CD8-positive, alpha-beta T cell (primary cell): ENCODE measurements at regions of chr4 and their contacts with region 1.

Region 1: GRCh38 chr4:15702941-15703403 is at the start of gene BST1:
- DNase-seq: peak; percentile 13 to 69 (median 51)
- ATAC-seq: peak; percentile 79
- H3K4me3 ChIP-seq: peak within 1 kb of the TSS; percentile 50 to 59
- H3K4me3 Mint-ChIP-seq: peak within 1 kb of the TSS; percentile 87
- H3K27ac ChIP-seq: no peak within 1 kb of the TSS
- H3K27ac Mint-ChIP-seq: no peak within 1 kb of the TSS
- H3K4me1 ChIP-seq: no peaks in the 10 kb centered on the region
- H3K4me1 Mint-ChIP-seq: peaks cover 16% of the 10 kb centered on the region
- H3K27me3 ChIP-seq: no peaks in the 10 kb centered on the region
- H3K27me3 Mint-ChIP-seq: peaks cover 16% of the 10 kb centered on the region
- CTCF ChIP-seq: no peak
- total RNA-seq, gene BST1: 0.43 to 0.47 TPM

Region 2: DNA sequence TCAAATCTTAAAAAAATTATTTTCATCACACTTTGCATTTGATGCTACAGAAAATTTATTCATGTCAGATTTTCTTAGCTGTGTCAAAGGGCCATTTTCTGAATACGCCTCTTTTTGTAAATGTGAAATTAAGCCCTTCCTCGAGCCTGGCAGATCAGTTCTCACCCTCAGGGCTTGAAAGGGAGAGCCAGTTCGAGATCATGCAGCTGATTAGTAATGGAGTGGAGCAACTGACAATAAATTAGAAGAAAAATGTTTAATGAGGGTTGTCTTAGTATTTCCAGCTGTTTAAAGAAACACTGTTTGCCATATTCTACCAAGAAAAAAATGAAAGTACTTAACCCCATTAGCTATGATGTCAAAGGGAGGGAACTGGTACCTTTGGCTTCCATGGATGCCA is 204.6 kb before region 1 on chr4:
- CTCF ChIA-PET with region 1: no interaction called
- POLR2A ChIA-PET with region 1: no interaction called
- intact Hi-C with region 1: no loop called
- DNase-seq: no peak
- ATAC-seq: no peak
- H3K4me3 ChIP-seq: no peak overlapping the region
- H3K4me3 Mint-ChIP-seq: no peak overlapping the region
- H3K27ac ChIP-seq: no peak overlapping the region
- H3K27ac Mint-ChIP-seq: no peak overlapping the region
- H3K4me1 ChIP-seq: no peaks in the 10 kb centered on the region
- H3K4me1 Mint-ChIP-seq: no peaks in the 10 kb centered on the region
- H3K27me3 ChIP-seq: no peaks in the 10 kb centered on the region
- H3K27me3 Mint-ChIP-seq: no peaks in the 10 kb centered on the region
- CTCF ChIP-seq: no peak

Region 3: GRCh38 chr4:15681207-15682015 is 21.6 kb before region 1 on chr4 and contains the start of gene FAM200B:
- CTCF ChIA-PET with region 1: interaction called, 3 read pairs
- POLR2A ChIA-PET with region 1: no interaction called
- intact Hi-C with region 1: loop called in 1 of 2 experiments (anchors 2 kb)
- DNase-seq: peak; percentile 92 to 98 (median 95)
- ATAC-seq: peak; percentile 96
- H3K4me3 ChIP-seq: peak within 1 kb of the TSS; percentile 82 to 87
- H3K4me3 Mint-ChIP-seq: peak within 1 kb of the TSS; percentile 93
- H3K27ac ChIP-seq: peak within 1 kb of the TSS; percentile 80 to 85
- H3K27ac Mint-ChIP-seq: peak within 1 kb of the TSS; percentile 97
- H3K4me1 ChIP-seq: peaks cover 18% of the 10 kb centered on the region
- H3K4me1 Mint-ChIP-seq: peaks cover 38% of the 10 kb centered on the region
- H3K27me3 ChIP-seq: no peaks in the 10 kb centered on the region
- H3K27me3 Mint-ChIP-seq: no peaks in the 10 kb centered on the region
- CTCF ChIP-seq: no peak
- total RNA-seq, gene FAM200B: 14.8 to 17.1 TPM